Caco-2 (cell line): ENCODE measurements at regions of chr1 and their contacts with region 1.

Region 1: DNA sequence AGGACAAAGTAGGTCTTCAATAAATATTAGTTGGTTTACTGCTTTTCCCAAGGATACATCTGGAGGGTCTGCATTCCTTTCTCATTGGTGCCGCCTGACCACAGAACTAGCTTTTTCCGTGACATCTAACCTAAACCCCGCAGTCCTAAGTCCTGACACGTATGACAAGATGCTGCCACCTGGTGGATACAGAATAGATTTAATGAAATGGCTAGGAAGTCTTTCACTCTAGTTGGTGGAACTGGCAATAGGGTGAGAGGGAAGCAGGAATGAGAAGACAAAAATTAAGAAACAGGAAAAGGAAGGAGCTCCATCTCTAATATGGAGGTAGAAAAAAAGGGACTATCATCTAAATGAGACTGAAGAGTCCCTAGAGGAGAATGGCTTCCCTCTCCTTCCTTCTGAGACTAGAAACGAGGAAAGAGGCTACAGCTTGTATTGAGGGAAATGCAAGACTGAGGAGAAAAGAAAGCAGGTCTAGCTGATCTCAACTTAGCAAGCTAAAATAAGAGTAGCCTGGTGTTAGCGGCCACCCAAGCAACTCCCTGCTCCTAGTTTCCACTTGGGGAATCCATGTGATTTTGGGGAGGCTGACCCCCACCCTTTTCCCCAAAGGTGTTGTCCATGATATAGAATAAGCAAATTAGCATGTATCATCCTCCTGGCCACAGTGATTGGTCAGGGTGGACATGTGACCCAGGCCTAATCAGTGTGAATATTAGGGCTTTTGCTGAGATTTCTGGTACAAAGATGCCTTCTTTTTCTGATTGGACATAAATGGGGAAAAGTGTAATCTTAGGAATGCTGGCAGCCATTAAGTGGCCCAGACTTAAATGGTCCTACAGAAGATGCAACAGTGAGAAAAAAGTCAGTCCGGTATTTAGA is 5.9 kb downstream of the RFX5 start:
- DNase-seq: peak; percentile 68 to 74
- H3K4me3 ChIP-seq: no peak overlapping the region
- H3K4me3 Mint-ChIP-seq: no peak overlapping the region
- H3K27ac Mint-ChIP-seq: peak overlapping the region; percentile 7
- H3K4me1 ChIP-seq: no peaks in the 10 kb centered on the region
- H3K4me1 Mint-ChIP-seq: peaks cover 8% of the 10 kb centered on the region
- H3K27me3 ChIP-seq: no peaks in the 10 kb centered on the region
- H3K27me3 Mint-ChIP-seq: no peaks in the 10 kb centered on the region
- CTCF ChIP-seq: peak; percentile 63 to 69

Region 2: GRCh38 chr1:150718225-150718891 is 622.8 kb before region 1 on chr1:
- CTCF ChIA-PET with region 1: no interaction called
- POLR2A ChIA-PET with region 1: no interaction called
- intact Hi-C with region 1: no loop called
- DNase-seq: no peak
- H3K4me3 ChIP-seq: no peak overlapping the region
- H3K4me3 Mint-ChIP-seq: no peak overlapping the region
- H3K27ac Mint-ChIP-seq: no peak overlapping the region
- H3K4me1 ChIP-seq: no peaks in the 10 kb centered on the region
- H3K4me1 Mint-ChIP-seq: no peaks in the 10 kb centered on the region
- H3K27me3 ChIP-seq: no peaks in the 10 kb centered on the region
- H3K27me3 Mint-ChIP-seq: no peaks in the 10 kb centered on the region
- CTCF ChIP-seq: no peak

Region 3: GRCh38 chr1:151198255-151199127 is 142.6 kb before region 1 on chr1 and contains the start of gene PIP5K1A:
- CTCF ChIA-PET with region 1: interaction called, 3 read pairs
- POLR2A ChIA-PET with region 1: no interaction called
- intact Hi-C with region 1: loop called (anchors 1 kb)
- DNase-seq: peak; percentile 97 to 98
- H3K4me3 ChIP-seq: peak within 1 kb of the TSS; percentile 60
- H3K4me3 Mint-ChIP-seq: peak within 1 kb of the TSS; percentile 89
- H3K27ac Mint-ChIP-seq: peak within 1 kb of the TSS; percentile 92
- H3K4me1 ChIP-seq: peaks cover 4% of the 10 kb centered on the region; the same call in 1 of the 2 replicates
- H3K4me1 Mint-ChIP-seq: peaks cover 13% of the 10 kb centered on the region
- H3K27me3 ChIP-seq: no peaks in the 10 kb centered on the region
- H3K27me3 Mint-ChIP-seq: no peaks in the 10 kb centered on the region
- CTCF ChIP-seq: no peak
- total RNA-seq, gene PIP5K1A: 88.6 and 95.1 TPM in 2 replicates

Region 4: DNA sequence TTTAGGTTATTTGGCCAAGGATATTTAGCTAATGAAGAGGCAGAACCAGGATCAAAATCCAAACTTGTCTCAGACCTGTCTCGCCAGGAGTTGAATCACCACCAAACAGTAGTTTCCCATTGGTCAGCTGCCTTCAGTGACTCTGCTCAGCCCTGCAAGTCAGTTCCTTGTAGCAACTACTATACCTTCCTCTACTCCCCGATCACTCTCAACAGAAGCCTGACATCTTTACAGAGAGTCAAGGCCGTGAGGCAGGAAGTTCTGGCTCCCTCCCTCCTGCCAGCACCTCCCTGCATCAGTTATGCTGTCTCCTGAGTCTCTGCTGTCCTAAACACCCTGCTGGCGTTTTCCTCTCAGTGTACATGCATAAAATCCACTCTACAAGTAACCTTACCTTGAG is 73.4 kb before region 1 on chr1:
- CTCF ChIA-PET with region 1: interaction called, 10 read pairs
- POLR2A ChIA-PET with region 1: no interaction called
- intact Hi-C with region 1: no loop called
- DNase-seq: no peak
- H3K4me3 ChIP-seq: no peak overlapping the region
- H3K4me3 Mint-ChIP-seq: no peak overlapping the region
- H3K27ac Mint-ChIP-seq: no peak overlapping the region
- H3K4me1 ChIP-seq: peaks cover 7% of the 10 kb centered on the region; the same call in 1 of the 2 replicates
- H3K4me1 Mint-ChIP-seq: peaks cover 7% of the 10 kb centered on the region
- H3K27me3 ChIP-seq: no peaks in the 10 kb centered on the region
- H3K27me3 Mint-ChIP-seq: no peaks in the 10 kb centered on the region
- CTCF ChIP-seq: no peak

Region 5: DNA sequence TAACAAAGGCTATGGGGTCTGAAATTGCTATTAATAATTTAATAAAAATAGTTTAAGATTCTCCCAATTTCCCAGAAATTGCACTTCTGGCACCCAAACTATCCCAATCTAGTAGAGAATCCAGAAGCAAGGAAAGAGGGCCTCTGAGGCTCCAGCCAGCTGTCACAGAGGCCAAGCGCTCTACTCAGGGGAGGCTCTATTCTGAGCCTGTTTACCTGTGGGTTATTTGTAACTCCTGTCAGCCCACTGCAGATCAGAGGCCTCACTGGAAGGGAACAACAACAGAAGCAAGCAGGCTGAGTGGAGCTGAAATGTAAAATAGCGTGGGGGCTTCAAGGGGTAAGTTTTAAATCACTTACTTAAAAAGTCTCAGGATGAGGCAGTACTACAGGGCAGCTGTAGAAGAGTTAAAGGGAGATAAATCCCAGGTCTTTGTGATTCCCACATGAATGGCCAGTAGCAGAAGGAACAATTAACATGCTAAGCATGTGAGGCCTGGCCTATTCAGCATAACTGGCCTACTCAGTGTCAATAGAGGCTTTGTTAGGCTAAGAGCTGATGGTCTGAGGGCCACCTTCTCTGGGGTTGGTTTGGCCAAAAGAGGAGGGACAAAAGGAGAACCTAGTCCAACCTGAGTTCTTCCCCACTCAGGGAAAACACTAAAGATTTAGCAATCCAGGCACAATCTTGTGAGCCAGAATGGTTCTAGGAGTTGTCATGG is 46.2 kb before region 1 on chr1:
- CTCF ChIA-PET with region 1: interaction called, 125 read pairs
- POLR2A ChIA-PET with region 1: no interaction called
- intact Hi-C with region 1: no loop called
- DNase-seq: no peak
- H3K4me3 ChIP-seq: no peak overlapping the region
- H3K4me3 Mint-ChIP-seq: no peak overlapping the region
- H3K27ac Mint-ChIP-seq: no peak overlapping the region
- H3K4me1 ChIP-seq: no peaks in the 10 kb centered on the region
- H3K4me1 Mint-ChIP-seq: no peaks in the 10 kb centered on the region
- H3K27me3 ChIP-seq: no peaks in the 10 kb centered on the region
- H3K27me3 Mint-ChIP-seq: no peaks in the 10 kb centered on the region
- CTCF ChIP-seq: no peak

Region 6: DNA sequence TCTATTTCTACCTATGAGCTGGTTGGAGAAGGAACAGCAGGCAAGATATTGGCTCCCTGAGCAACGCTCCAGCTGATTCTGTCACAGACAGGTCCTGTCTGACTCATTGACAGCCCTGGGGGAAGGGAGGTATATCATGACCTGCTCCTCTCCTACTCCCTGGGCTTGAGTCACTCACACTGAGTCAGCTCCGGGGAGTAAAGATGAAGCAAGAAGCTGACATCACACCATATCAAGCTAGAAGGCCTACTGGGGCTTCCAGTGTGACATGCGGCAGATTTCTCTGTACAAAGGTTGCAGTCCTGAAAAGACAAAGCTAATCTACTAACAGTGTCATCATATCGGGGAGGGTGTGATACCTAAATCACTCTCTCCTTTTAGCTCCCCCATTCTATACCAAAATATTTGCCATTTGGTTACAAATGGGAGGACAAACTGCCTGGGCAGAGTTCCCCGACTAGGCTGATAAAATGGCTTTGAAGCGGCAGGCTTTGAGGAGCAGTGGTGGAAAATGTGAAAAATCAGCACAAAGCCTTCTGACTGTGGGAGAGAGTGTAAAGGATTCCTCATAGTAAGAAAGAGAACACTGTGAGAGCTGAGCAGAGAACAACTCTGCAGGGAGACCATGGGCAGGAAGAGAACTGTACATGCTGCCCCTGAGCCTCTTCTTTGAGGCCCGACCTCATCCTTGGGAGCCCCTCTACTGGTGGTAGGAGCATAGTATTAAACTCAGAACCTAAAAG is 29.4 kb before region 1 on chr1:
- CTCF ChIA-PET with region 1: interaction called, 28 read pairs
- POLR2A ChIA-PET with region 1: no interaction called
- intact Hi-C with region 1: no loop called
- DNase-seq: peak; percentile 83 to 89
- H3K4me3 ChIP-seq: no peak overlapping the region
- H3K4me3 Mint-ChIP-seq: no peak overlapping the region
- H3K27ac Mint-ChIP-seq: peak overlapping the region; percentile 78
- H3K4me1 ChIP-seq: peaks cover 67% of the 10 kb centered on the region
- H3K4me1 Mint-ChIP-seq: peaks cover 43% of the 10 kb centered on the region
- H3K27me3 ChIP-seq: no peaks in the 10 kb centered on the region
- H3K27me3 Mint-ChIP-seq: no peaks in the 10 kb centered on the region
- CTCF ChIP-seq: no peak

Region 7: GRCh38 chr1:151327223-151327902 is 13.7 kb before region 1 on chr1 and contains the start of gene PI4KB:
- CTCF ChIA-PET with region 1: interaction called, 20 read pairs
- POLR2A ChIA-PET with region 1: interaction called, 6 read pairs
- intact Hi-C with region 1: no loop called
- DNase-seq: peak; percentile 97 to 98
- H3K4me3 ChIP-seq: peak within 1 kb of the TSS; percentile 75
- H3K4me3 Mint-ChIP-seq: peak within 1 kb of the TSS; percentile 98
- H3K27ac Mint-ChIP-seq: peak within 1 kb of the TSS; percentile 95
- H3K4me1 ChIP-seq: peaks cover 11% of the 10 kb centered on the region
- H3K4me1 Mint-ChIP-seq: peaks cover 25% of the 10 kb centered on the region
- H3K27me3 ChIP-seq: no peaks in the 10 kb centered on the region
- H3K27me3 Mint-ChIP-seq: no peaks in the 10 kb centered on the region
- CTCF ChIP-seq: no peak
- total RNA-seq, gene PI4KB: 49.7 and 52.7 TPM in 2 replicates

Region 8: GRCh38 chr1:151377150-151377884 is 36.2 kb after region 1 on chr1:
- CTCF ChIA-PET with region 1: interaction called, 14 read pairs
- POLR2A ChIA-PET with region 1: no interaction called
- intact Hi-C with region 1: no loop called
- DNase-seq: no peak
- H3K4me3 ChIP-seq: no peak overlapping the region
- H3K4me3 Mint-ChIP-seq: no peak overlapping the region
- H3K27ac Mint-ChIP-seq: no peak overlapping the region
- H3K4me1 ChIP-seq: peaks cover 8% of the 10 kb centered on the region
- H3K4me1 Mint-ChIP-seq: peaks cover 11% of the 10 kb centered on the region
- H3K27me3 ChIP-seq: no peaks in the 10 kb centered on the region
- H3K27me3 Mint-ChIP-seq: no peaks in the 10 kb centered on the region
- CTCF ChIP-seq: no peak

Region 9: GRCh38 chr1:151443846-151444782 is 103.0 kb after region 1 on chr1:
- CTCF ChIA-PET with region 1: no interaction called
- POLR2A ChIA-PET with region 1: no interaction called
- intact Hi-C with region 1: no loop called
- DNase-seq: peak; percentile 74 to 80
- H3K4me3 ChIP-seq: no peak overlapping the region
- H3K4me3 Mint-ChIP-seq: no peak overlapping the region
- H3K27ac Mint-ChIP-seq: peak overlapping the region; percentile 70
- H3K4me1 ChIP-seq: peaks cover 5% of the 10 kb centered on the region; the same call in 1 of the 2 replicates
- H3K4me1 Mint-ChIP-seq: peaks cover 6% of the 10 kb centered on the region
- H3K27me3 ChIP-seq: no peaks in the 10 kb centered on the region
- H3K27me3 Mint-ChIP-seq: no peaks in the 10 kb centered on the region
- CTCF ChIP-seq: peak; percentile 75 to 82